ENCODE measurements at regions of chr2 and their contacts with region 1.

Region 1: DNA sequence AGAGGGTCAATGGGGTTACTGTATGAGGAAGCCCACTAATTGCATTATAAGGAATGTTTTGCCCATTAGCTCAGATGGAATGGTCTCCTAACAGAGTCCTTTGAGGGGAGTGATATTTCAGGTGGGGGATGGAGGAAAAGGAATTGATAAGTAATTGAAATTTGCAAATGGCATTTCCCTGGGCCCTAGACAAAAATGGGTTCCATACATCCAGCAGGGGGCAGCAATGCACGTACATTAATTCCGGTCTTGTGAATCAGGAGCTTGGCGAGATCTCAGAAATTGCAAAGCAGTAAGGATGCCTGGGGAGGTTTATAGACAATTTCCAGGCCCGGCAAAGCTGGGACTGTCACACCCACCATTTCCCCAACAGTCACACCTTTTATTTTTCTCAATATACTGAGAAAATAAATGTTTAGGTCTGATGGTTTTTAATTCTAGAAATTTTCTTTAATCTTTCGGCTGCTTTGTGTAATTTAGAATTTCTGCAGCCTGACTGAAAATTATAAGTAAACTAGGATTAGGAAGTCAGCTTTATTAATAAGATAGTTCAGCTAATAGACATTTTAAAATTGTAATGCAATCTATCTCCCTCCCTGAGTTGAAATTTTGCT is 122.8 kb downstream of the LYPD1 start:
- H3K4me3 ChIP-seq: no peak overlapping the region
- H3K27ac ChIP-seq: no peak overlapping the region
- H3K4me1 ChIP-seq: no peaks in the 10 kb centered on the region
- CTCF ChIP-seq: no peak

Region 2: DNA sequence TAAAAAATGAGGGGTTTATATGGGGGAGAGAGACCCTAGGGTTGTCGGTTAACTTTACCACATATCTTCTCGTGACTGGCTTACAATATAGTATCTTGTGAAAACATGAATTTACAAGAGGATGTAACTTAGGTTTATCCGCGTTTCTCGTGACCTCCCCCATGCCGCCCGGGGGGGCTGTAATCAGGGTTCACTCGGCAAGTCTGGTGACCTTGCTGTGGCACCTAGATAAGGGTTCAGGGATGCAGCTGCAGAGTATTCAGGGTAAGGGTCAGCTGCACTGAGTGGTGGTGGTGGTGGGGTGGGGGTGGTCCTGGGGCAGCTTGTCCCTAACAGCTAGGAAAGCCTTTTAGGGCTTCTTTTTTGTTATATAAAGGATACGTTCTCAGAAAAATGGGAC is 10.5 kb after region 1 on chr2:
- CTCF ChIA-PET with region 1: interaction called, 18 read pairs
- POLR2A ChIA-PET with region 1: no interaction called
- H3K4me3 ChIP-seq: no peak overlapping the region
- H3K27ac ChIP-seq: no peak overlapping the region
- H3K4me1 ChIP-seq: no peaks in the 10 kb centered on the region
- CTCF ChIP-seq: no peak

Region 3: GRCh38 chr2:132581591-132582352 is 34.6 kb after region 1 on chr2:
- CTCF ChIA-PET with region 1: no interaction called
- POLR2A ChIA-PET with region 1: no interaction called
- H3K4me3 ChIP-seq: no peak overlapping the region
- H3K27ac ChIP-seq: no peak overlapping the region
- H3K4me1 ChIP-seq: no peaks in the 10 kb centered on the region
- CTCF ChIP-seq: no peak

Region 4: GRCh38 chr2:133166031-133166430 is 618.9 kb after region 1 on chr2:
- CTCF ChIA-PET with region 1: interaction called, 41 read pairs
- POLR2A ChIA-PET with region 1: no interaction called
- H3K4me3 ChIP-seq: no peak overlapping the region
- H3K27ac ChIP-seq: no peak overlapping the region
- H3K4me1 ChIP-seq: no peaks in the 10 kb centered on the region
- CTCF ChIP-seq: no peak

Region 5: GRCh38 chr2:133171393-133172004 is 624.3 kb after region 1 on chr2:
- CTCF ChIA-PET with region 1: interaction called, 41 read pairs
- POLR2A ChIA-PET with region 1: no interaction called
- H3K4me3 ChIP-seq: no peak overlapping the region
- H3K27ac ChIP-seq: no peak overlapping the region
- H3K4me1 ChIP-seq: no peaks in the 10 kb centered on the region
- CTCF ChIP-seq: peak; percentile 50; the same call in 1 of the 2 replicates